Activated T-helper 2 cell treated with anti-CD3 and anti-CD28 coated beads, Interferon-gamma antibody, Interleukin-2, Interleukin-4, amounts not matched to agents 10 μg/mL and 5 μg/mL and 100 μg/mL, durations not matched to agents 14 hours and 24 hours and 36 hours (primary cell): ENCODE measurements at regions of chr12 and their contacts with region 1.

Region 1: DNA sequence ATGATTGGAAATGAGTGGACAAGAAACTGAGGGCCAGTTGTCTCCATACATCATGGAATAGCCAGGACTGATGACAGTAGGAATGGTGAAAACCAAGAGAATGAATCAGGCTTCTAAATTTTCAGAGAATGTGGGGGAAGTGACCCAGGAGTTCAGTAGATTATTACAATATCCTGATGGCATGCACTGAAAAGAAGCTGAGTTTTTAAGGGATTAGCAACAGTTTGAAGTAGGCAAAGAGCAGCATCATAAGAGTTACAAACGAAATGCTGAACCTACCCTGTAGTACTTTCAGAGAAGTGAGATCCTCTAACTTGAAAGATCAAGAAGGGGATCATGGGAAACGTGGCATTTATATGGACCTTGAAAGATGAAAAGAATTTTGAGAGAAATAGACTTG is 13.2 kb downstream of the SLC2A14 start:
- DNase-seq: no peak
- H3K4me3 Mint-ChIP-seq: no peak overlapping the region
- H3K27ac Mint-ChIP-seq: no peak overlapping the region
- H3K4me1 Mint-ChIP-seq: peaks cover 14% of the 10 kb centered on the region
- H3K27me3 Mint-ChIP-seq: no peaks in the 10 kb centered on the region

Region 2: DNA sequence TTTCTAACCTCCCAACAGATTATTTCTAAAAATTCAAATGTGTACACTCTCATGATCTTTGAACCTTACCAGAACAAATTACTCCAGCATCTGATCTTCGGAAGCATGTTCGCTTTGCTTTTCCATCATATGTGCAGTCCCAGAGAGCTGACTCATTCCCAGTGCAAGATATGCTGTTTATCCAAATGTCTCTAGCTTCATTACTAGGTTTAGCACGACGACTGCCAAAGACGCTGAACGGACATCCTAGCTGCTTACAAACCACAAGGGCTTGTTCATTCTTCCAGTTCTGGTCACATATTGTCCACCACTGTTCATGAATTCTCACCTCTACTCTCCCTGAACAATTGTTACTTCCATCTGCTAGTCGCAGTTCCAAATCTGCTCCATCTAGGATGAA is 456.1 kb before region 1 on chr12:
- intact Hi-C with region 1: no loop called
- DNase-seq: no peak
- H3K4me3 Mint-ChIP-seq: no peak overlapping the region
- H3K27ac Mint-ChIP-seq: no peak overlapping the region
- H3K4me1 Mint-ChIP-seq: no peaks in the 10 kb centered on the region
- H3K27me3 Mint-ChIP-seq: peaks cover 6% of the 10 kb centered on the region

Region 3: GRCh38 chr12:7555752-7556151 is 303.8 kb before region 1 on chr12:
- intact Hi-C with region 1: no loop called
- DNase-seq: no peak
- H3K4me3 Mint-ChIP-seq: no peak overlapping the region
- H3K27ac Mint-ChIP-seq: no peak overlapping the region
- H3K4me1 Mint-ChIP-seq: no peaks in the 10 kb centered on the region
- H3K27me3 Mint-ChIP-seq: peaks cover 6% of the 10 kb centered on the region

Region 4: GRCh38 chr12:7915559-7916403 is 56.2 kb after region 1 on chr12:
- intact Hi-C with region 1: loop called (anchors 5 kb)
- DNase-seq: no peak
- H3K4me3 Mint-ChIP-seq: no peak overlapping the region
- H3K27ac Mint-ChIP-seq: no peak overlapping the region
- H3K4me1 Mint-ChIP-seq: peaks cover 11% of the 10 kb centered on the region
- H3K27me3 Mint-ChIP-seq: no peaks in the 10 kb centered on the region

Region 5: DNA sequence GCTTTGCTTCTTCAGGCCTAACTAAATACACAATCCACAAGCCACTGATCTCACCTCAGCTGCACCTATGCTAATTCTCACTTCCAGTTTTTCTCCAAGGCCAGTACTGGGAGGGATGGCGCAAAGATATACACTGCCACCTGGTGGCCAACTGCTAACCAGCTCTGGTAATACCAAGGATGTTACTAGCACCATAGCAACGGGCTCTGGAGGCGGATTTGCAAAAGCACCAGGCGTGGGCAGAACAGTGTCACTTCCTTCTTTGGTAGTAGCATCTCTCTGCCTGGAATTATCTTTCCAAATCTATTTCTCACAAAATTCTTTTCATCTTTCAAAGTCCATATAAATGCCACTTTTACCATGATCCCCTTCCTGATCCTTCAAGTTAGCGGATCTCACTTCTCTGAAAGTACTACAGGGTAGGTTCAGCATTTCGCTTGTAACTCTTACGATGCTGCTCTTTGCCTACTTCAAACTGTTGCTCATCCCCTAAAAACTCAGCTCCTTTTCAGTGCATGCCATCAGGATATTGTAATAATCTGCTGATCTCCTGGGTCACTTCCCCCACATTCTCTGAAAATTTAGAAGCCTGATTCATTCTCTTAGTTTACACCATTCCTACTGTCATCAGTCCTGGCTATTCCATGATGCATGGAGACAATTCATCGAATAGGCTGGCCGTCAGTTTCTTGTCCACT is 135.9 kb after region 1 on chr12:
- intact Hi-C with region 1: loop called (anchors 2 kb)
- DNase-seq: peak; percentile 80
- H3K4me3 Mint-ChIP-seq: no peak overlapping the region
- H3K27ac Mint-ChIP-seq: no peak overlapping the region
- H3K4me1 Mint-ChIP-seq: peaks cover 17% of the 10 kb centered on the region
- H3K27me3 Mint-ChIP-seq: no peaks in the 10 kb centered on the region